Activated CD4-positive, alpha-beta T cell treated with anti-CD3 and anti-CD28 coated beads, Interleukin-2, amount 10 ng/mL, durations not matched to agents 24 days and 14 days (primary cell): ENCODE measurements at regions of chr14 and their contacts with region 1.

Region 1: GRCh38 chr14:101761032-101761880 is at the start of gene PPP2R5C:
- DNase-seq: peak; percentile 94
- H3K4me3 Mint-ChIP-seq: peak within 1 kb of the TSS; percentile 90
- H3K27ac Mint-ChIP-seq: peak within 1 kb of the TSS; percentile 86
- H3K4me1 Mint-ChIP-seq: peaks cover 39% of the 10 kb centered on the region
- H3K27me3 Mint-ChIP-seq: peaks cover 3% of the 10 kb centered on the region
- total RNA-seq, gene PPP2R5C: 160 and 181 TPM in 2 replicates

Region 2: GRCh38 chr14:101721111-101721510 is 40.1 kb before region 1 on chr14:
- intact Hi-C with region 1: no loop called
- DNase-seq: peak; percentile 57
- H3K4me3 Mint-ChIP-seq: no peak overlapping the region
- H3K27ac Mint-ChIP-seq: peak overlapping the region; percentile 28
- H3K4me1 Mint-ChIP-seq: peaks cover 36% of the 10 kb centered on the region
- H3K27me3 Mint-ChIP-seq: no peaks in the 10 kb centered on the region

Region 3: GRCh38 chr14:101731187-101732080 is 29.8 kb before region 1 on chr14:
- intact Hi-C with region 1: loop called (anchors 1 kb)
- DNase-seq: peak; percentile 94
- H3K4me3 Mint-ChIP-seq: peak overlapping the region; percentile 84
- H3K27ac Mint-ChIP-seq: peak overlapping the region; percentile 98
- H3K4me1 Mint-ChIP-seq: peaks cover 56% of the 10 kb centered on the region
- H3K27me3 Mint-ChIP-seq: no peaks in the 10 kb centered on the region

Region 4: GRCh38 chr14:101809671-101810514 is 48.6 kb after region 1 on chr14:
- intact Hi-C with region 1: loop called (anchors 2 kb)
- DNase-seq: peak; percentile 96
- H3K4me3 Mint-ChIP-seq: peak overlapping the region; percentile 96
- H3K27ac Mint-ChIP-seq: peak overlapping the region; percentile 99
- H3K4me1 Mint-ChIP-seq: peaks cover 43% of the 10 kb centered on the region
- H3K27me3 Mint-ChIP-seq: no peaks in the 10 kb centered on the region